Sigmoid colon (tissue), 7 donors: ENCODE measurements at regions of chr3 and their contacts with region 1.

Region 1: GRCh38 chr3:49358217-49358883 is at the start of gene GPX1:
- DNase-seq: peak; percentile 98
- H3K4me3 ChIP-seq: peak within 1 kb of the TSS; percentile 68 to 83 (median 76)
- H3K27ac ChIP-seq: peak within 1 kb of the TSS; percentile 89 to 95 (median 94)
- H3K4me1 ChIP-seq: peaks cover 0 to 34% (median 26%) of the 10 kb centered on the region in 4 donors
- H3K27me3 ChIP-seq: no peaks in the 10 kb centered on the region
- CTCF ChIP-seq: no peak
- EP300 ChIP-seq: peak in 1 of 4 donors; percentile 37
- POLR2A ChIP-seq: peak; percentile 90
- total RNA-seq, gene GPX1: 164 to 331 (median 268) TPM

Region 2: DNA sequence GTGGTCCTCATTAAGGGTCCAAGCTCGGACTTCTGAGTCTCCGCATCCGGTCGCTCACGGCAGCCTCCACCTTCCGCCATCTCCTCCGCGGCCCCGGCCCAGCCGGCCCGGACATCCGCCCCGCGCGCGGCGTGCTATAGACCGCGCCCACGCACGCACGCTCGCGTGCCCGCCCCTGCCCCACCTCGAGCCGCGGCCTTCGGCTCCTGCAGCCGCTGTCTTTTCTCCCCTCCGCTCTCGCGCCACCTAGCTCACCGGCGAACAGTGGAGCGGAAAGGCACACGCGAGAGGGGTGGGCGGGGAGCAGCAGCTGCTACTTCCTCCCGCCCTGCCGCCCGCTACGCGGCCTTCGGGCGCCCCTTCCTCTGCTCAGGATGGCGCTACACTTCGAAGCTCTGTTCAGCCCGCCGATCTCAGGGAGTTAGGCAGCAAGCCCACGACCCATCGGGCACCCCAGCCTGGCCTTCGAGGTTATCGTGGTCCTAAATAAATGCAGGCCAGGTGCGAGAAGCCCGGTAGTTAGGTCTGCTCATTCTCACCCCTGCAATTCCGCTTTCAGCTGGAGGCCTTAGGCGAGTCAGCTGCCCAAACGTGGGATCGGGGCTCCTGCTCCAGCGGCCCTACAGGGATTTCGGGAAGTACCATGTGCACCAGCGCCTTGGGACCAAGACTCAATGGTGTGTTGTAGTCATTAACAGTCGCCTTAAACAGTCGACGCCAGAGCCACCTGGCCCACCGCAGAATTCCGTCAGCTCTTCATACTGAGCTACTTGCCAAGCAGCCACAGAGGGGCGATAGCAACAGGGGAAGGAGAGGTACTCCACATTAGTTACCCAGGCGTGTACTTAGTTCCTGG is 18.2 kb before region 1 on chr3 and contains the start of gene USP4:
- intact Hi-C with region 1: loop called (anchors 2 kb)
- DNase-seq: peak; percentile 94
- H3K4me3 ChIP-seq: peak within 1 kb of the TSS; percentile 63 to 89 (median 68)
- H3K27ac ChIP-seq: peak within 1 kb of the TSS; percentile 88 to 95 (median 93)
- H3K4me1 ChIP-seq: peaks cover 0 to 26% (median 21%) of the 10 kb centered on the region in 4 donors
- H3K27me3 ChIP-seq: no peaks in the 10 kb centered on the region
- CTCF ChIP-seq: peak; percentile 6 to 15 (median 13)
- EP300 ChIP-seq: peak in 1 of 4 donors; percentile 2
- POLR2A ChIP-seq: peak in 1 of 2 donors; percentile 45
- total RNA-seq, gene USP4: 16.3 to 28.2 (median 20.5) TPM

Region 3: DNA sequence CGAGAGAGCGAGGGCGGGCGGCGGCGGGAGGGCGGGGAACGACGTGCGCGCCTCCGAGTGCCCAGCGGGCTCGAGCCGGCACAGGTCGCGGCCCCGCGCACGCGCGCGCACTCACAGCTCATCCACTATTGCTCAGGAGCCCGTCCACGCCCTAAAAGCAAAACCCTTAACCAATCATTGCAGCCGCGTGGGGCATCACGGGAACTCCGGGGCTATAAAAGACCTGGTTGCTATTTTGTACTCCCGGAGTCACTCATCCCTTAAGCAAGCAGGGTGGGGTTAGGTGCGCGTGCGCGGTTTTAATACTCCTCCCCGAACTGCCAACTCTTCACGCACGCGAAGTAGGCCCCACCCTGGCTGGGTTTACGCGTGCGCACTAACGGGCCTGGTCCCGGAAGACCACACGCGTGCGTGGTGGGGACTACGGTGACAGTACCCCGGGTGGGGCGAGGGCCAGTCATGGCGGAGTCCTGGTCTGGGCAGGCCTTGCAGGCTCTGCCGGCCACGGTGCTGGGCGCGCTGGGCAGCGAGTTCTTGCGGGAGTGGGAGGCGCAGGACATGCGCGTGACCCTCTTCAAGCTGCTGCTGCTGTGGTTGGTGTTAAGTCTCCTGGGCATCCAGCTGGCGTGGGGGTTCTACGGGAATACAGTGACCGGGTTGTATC is 53.8 kb after region 1 on chr3 and contains the starts of genes RHOA and TCTA:
- intact Hi-C with region 1: loop called (anchors 2 kb)
- DNase-seq: peak; percentile 100
- H3K4me3 ChIP-seq: peak within 1 kb of the TSS; percentile 69 to 95 (median 74)
- H3K27ac ChIP-seq: peak within 1 kb of the TSS; percentile 95 to 99 (median 98)
- H3K4me1 ChIP-seq: peaks cover 0 to 73% (median 50%) of the 10 kb centered on the region in 4 donors
- H3K27me3 ChIP-seq: no peaks in the 10 kb centered on the region
- CTCF ChIP-seq: no peak
- EP300 ChIP-seq: peak in 1 of 4 donors; percentile 80
- POLR2A ChIP-seq: peak; percentile 93 to 96
- total RNA-seq, gene RHOA: 369 to 440 (median 416) TPM
- total RNA-seq, gene TCTA: 15.1 to 25.0 (median 16.5) TPM

Region 4: GRCh38 chr3:49469936-49470713 is 111.8 kb after region 1 on chr3 and contains the start of gene DAG1:
- intact Hi-C with region 1: loop called (anchors 5 kb)
- DNase-seq: peak; percentile 99
- H3K4me3 ChIP-seq: peak within 1 kb of the TSS; percentile 76 to 88 (median 86)
- H3K27ac ChIP-seq: peak within 1 kb of the TSS; percentile 97 to 100 (median 98)
- H3K4me1 ChIP-seq: peaks cover 0 to 44% (median 36%) of the 10 kb centered on the region in 4 donors
- H3K27me3 ChIP-seq: no peaks in the 10 kb centered on the region
- CTCF ChIP-seq: no peak
- EP300 ChIP-seq: no peak
- POLR2A ChIP-seq: peak; percentile 21 to 56
- total RNA-seq, gene DAG1: 42.8 to 73.4 (median 66.5) TPM

Region 5: DNA sequence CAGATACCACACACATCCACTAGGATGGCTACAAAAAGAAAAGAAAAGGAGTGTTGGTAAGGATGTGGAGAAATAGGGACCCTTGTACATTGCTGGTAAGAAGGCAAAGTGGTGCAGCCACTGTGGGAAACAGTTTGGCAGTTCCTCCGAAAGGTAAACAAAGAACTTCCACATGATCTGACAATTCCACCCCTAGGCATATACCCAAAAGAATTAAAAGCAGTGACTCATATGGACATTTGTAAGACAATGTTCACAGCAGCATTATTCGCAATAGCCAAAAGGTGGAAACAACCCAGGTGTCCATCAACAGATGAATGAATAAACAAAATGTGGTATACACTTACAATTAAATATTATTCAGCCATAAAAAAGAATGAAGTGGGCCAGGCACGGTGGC is 387.7 kb after region 1 on chr3:
- intact Hi-C with region 1: no loop called
- DNase-seq: no peak
- H3K4me3 ChIP-seq: no peak overlapping the region
- H3K27ac ChIP-seq: peak overlapping the region in 3 of 4 donors; percentile 25 to 57 (median 48)
- H3K4me1 ChIP-seq: peaks cover 0 to 30% (median 17%) of the 10 kb centered on the region in 4 donors
- H3K27me3 ChIP-seq: no peaks in the 10 kb centered on the region
- CTCF ChIP-seq: peak in 1 of 4 experiments; percentile 16
- EP300 ChIP-seq: no peak
- POLR2A ChIP-seq: no peak